ENCODE measurements at regions of chr20 and their contacts with region 1.

Region 1: DNA sequence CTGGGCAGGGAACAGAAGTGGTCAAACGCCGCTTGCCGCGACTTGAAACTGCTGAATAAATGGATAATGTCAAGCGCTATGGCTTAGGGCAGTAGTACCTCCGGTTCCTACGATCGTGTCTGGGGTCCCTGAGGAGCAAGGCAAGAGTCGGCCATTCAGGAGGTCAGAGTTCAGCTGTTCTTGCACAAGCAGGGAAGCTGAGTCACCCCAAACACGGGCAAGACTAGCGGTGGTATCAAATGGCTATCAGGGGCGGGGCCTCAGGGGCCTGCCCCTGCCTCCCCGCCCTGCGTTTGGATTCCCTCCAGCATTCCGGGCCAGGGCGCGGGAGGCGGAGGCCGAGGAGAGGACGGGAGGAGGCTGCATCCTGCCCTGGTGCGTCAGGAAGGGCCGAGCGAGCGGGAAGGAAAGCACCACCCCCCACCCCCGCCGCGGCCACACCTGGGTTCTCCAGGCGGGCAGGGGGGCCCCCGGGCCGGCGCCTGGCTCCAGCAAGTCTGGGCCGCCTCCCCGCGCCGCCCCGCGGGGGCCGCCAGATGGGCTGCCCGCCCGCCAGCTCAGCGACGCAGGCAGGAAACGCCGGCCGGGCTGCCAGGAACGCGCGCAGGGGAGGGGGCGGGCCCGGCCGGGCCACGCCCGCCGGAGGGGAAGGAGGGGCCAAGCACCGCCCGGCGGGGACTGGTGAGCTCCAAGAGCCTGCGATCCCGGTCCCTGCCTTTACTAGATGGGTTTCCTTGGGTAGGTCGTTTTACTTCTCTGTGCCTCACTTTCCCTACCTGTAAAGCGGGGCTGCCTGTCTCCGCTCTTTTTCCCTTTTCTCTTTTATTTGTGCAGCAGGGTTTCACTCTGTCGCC is 32.2 kb upstream of the ID1 start:
- DNase-seq: peak; percentile 90 to 99
- H3K4me3 ChIP-seq: peak overlapping the region; percentile 57 to 68
- H3K27ac ChIP-seq: peak overlapping the region; percentile 94 to 97
- H3K4me1 ChIP-seq: peaks cover 9 to 22% of the 10 kb centered on the region in 2 donors
- H3K27me3 ChIP-seq: no peaks in the 10 kb centered on the region
- CTCF ChIP-seq: peak in 1 of 3 experiments; percentile 7

Region 2: DNA sequence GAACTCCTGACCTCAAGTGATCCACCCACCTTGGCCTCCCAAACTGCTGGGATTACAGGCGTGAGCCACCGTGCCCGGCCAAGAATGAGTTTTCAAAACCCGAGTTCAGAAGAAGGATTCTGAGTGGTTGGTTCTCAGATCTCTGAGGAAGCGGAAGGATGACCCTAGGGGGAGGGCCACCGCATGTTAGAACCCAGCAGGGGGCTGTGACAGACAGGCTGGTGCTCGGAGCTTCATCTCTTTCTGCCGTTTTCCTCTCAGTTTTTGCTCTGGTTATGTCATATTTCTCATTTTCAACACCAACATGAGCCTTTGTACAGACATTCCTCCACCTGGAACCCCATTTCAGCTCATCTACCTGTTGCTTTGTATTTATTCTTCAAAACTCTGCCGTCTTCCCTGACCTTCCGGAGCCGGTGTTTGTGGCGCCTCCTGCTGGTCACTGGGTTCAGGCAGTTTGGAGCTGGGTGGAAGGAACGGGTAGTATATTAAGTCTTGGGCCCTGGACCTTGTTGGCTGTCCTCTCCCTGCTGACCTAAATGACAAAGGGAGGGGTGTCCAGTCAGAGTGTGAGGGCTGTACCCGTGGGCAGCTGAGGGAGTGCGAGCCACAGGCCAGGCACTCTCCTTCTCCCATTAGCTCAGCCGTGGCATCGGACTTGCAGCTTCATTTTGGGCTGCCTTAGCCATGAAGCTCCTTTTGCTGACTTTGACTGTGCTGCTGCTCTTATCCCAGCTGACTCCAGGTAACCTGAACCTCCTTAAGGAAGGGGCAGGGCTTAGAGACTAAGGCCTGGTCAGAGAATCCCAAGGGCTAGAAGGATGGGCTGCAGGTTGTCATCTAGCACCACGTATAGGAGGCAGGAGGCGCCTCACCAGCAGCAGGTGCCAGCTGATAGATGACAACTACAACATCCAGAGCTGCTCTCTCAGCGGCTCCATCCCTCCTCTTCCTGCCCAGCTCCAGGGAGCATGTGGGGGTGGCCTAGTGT is 132.6 kb before region 1 on chr20 and contains the start of gene DEFB123:
- intact Hi-C with region 1: no loop called
- DNase-seq: no peak
- H3K4me3 ChIP-seq: no peak within 1 kb of the TSS
- H3K27ac ChIP-seq: no peak within 1 kb of the TSS
- H3K4me1 ChIP-seq: no peaks in the 10 kb centered on the region
- H3K27me3 ChIP-seq: no peaks in the 10 kb centered on the region
- CTCF ChIP-seq: no peak
- total RNA-seq, gene DEFB123: not detected

Region 3: GRCh38 chr20:31560094-31560899 is 12.6 kb before region 1 on chr20:
- intact Hi-C with region 1: loop called (anchors 1 kb)
- DNase-seq: peak; percentile 35 to 89
- H3K4me3 ChIP-seq: no peak overlapping the region
- H3K27ac ChIP-seq: peak overlapping the region; percentile 78 to 92
- H3K4me1 ChIP-seq: peaks cover 10 to 23% of the 10 kb centered on the region in 2 donors
- H3K27me3 ChIP-seq: no peaks in the 10 kb centered on the region
- CTCF ChIP-seq: peak; percentile 83 to 84 (median 83)

Region 4: DNA sequence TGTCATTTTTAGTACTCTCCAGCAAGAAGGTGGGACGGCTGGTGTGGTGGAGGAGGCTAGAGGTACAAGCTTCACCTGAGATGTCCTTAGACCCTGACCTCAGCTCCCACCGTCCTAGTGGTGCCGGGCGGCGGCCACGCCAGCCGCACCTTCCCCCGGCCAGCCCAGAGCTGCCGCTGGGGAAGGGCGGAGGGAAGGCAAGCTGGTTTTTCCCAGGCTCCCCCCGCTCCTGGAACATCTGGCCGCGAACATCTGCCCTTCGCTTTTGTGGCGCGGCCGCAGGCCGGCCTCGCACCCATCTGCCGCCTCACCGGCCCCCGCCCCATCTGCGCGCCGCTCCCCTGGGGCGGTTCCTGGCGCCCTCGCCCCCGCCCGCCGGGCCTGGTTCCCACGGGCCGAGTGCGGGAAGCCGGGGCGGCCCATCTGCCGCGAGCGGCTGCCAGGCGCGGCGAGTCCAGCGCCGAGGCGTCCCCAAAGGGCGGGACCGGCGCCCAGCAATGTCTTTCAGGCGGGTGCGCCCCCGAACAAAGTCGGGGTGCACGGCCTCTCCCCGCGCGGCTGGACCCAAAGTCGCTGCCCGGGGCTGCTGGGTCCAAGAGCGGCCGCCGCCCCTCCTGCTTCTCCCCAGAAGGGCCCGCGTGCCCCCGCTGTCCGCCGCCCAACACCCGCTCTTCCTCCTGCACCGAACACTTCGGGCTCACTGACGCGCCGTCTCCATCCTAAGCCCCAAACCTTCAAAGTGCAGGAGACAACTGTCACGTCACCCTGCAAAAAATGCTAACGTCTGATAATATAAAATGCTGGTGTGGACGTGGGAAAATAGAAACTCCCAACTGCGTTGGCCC is 14.8 kb after region 1 on chr20:
- intact Hi-C with region 1: loop called (anchors 1 kb)
- DNase-seq: peak in 1 of 2 donors; percentile 74
- H3K4me3 ChIP-seq: peak overlapping the region; percentile 46 to 82
- H3K27ac ChIP-seq: peak overlapping the region; percentile 79 to 87
- H3K4me1 ChIP-seq: peaks cover 0 to 16% of the 10 kb centered on the region in 2 donors
- H3K27me3 ChIP-seq: no peaks in the 10 kb centered on the region
- CTCF ChIP-seq: no peak

Region 5: DNA sequence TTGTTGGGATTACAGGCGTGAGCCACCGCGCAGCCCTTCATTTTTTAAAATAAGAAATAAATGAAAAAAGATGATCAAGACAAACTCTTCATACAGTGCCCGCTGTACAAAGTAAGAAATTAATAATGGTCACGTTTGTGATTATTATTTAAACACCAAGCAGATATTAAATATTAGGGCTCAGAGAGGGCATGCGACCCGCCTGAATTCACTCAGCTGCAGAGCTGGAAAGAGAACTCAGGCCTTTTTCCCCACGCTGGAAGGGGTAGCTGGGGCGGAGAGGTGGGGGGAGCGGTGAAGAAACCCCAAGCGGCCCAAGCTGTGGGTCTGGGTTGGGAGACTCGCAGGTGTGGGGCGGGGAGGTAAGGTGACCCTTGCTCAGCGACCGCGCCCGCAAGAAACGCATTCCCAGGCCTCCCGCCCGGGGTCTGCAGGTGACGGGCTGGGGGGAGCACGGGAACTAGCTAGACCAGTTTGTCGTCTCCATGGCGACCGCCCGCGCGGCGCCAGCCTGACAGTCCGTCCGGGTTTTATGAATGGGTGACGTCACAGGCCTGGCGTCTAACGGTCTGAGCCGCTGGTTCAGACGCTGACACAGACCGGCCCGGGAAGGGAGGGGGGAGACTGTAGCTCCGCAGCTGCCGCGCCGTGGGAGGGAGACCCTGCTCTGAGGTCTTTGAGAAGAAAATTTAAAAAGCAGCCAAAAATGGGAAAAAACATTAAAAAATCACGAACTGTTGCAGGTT is 31.1 kb after region 1 on chr20:
- intact Hi-C with region 1: loop called (anchors 1 kb)
- DNase-seq: peak; percentile 94 to 99
- H3K4me3 ChIP-seq: peak overlapping the region; percentile 83 to 88
- H3K27ac ChIP-seq: peak overlapping the region; percentile 89 to 98
- H3K4me1 ChIP-seq: peaks cover 0 to 13% of the 10 kb centered on the region in 2 donors
- H3K27me3 ChIP-seq: no peaks in the 10 kb centered on the region
- CTCF ChIP-seq: no peak

Region 6: GRCh38 chr20:31822421-31823330 is 249.7 kb after region 1 on chr20:
- intact Hi-C with region 1: no loop called
- DNase-seq: peak; percentile 59 to 94
- H3K4me3 ChIP-seq: peak overlapping the region in 1 of 2 donors; percentile 1
- H3K27ac ChIP-seq: peak overlapping the region; percentile 53 to 79
- H3K4me1 ChIP-seq: peaks cover 9 to 29% of the 10 kb centered on the region in 2 donors
- H3K27me3 ChIP-seq: no peaks in the 10 kb centered on the region
- CTCF ChIP-seq: peak; percentile 95 to 99 (median 98)

Measured in ascending aorta (tissue), 2 donors.